PC-9 (cell line): ENCODE measurements at regions of chr10 and their contacts with region 1.

Region 1: DNA sequence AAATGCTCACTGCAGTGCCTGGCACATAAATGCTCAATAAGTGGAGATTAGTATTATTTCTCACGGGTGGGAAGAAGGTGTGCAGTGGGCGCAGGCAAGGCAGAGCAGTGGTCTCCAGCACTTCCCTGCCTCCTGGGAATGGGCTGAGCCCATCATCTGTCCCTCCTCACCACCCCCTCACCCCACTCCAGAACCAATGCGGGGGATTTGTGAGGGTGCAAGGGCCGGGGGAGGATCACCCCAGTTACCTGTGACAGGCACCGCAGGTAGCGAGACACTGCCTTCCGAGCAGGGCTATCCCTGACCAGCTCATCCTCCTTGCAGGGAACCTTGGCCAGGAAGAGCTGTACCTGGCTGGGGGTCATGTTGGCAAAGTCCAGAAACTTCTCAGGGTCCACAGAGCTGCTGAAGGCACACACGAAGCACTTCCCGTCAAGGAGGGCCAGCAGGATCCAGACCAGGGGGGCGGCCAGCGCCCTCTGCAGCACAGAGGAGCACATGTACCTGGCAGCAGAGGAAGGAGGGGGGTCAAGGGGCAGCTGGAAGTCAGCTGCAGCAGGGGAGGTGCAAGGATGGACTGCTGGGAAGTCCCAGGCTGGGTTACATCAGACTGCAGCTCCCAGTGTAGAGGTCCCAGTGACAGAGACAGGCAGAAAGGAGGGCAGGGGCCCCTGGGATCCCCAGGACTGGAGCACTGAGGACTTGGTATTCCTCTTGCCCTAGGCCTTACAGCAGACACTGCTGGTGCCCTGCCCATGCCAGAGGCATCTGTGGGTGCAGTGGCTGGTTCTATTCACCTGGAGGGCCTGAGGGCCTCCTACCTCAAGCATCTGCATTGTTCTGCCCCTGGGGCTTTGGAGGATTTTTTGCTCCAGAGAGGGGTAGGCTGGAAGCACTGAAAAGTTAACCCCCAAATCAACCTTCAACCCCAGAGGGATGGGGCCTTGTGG is 2.7 kb downstream of the CALHM3 start:
- DNase-seq: peak in 1 of 2 experiments; percentile 18
- H3K4me3 ChIP-seq: no peak overlapping the region
- H3K27ac ChIP-seq: no peak overlapping the region
- H3K4me1 ChIP-seq: peaks cover 57% of the 10 kb centered on the region
- H3K27me3 ChIP-seq: no peaks in the 10 kb centered on the region
- CTCF ChIP-seq: no peak; the same call in 1 of the 2 replicates

Region 2: GRCh38 chr10:102033787-102034186 is 1442.5 kb before region 1 on chr10:
- CTCF ChIA-PET with region 1: no interaction called
- POLR2A ChIA-PET with region 1: no interaction called
- intact Hi-C with region 1: no loop called
- DNase-seq: no peak
- H3K4me3 ChIP-seq: no peak overlapping the region
- H3K27ac ChIP-seq: no peak overlapping the region
- H3K4me1 ChIP-seq: no peaks in the 10 kb centered on the region
- H3K27me3 ChIP-seq: no peaks in the 10 kb centered on the region
- CTCF ChIP-seq: no peak

Region 3: DNA sequence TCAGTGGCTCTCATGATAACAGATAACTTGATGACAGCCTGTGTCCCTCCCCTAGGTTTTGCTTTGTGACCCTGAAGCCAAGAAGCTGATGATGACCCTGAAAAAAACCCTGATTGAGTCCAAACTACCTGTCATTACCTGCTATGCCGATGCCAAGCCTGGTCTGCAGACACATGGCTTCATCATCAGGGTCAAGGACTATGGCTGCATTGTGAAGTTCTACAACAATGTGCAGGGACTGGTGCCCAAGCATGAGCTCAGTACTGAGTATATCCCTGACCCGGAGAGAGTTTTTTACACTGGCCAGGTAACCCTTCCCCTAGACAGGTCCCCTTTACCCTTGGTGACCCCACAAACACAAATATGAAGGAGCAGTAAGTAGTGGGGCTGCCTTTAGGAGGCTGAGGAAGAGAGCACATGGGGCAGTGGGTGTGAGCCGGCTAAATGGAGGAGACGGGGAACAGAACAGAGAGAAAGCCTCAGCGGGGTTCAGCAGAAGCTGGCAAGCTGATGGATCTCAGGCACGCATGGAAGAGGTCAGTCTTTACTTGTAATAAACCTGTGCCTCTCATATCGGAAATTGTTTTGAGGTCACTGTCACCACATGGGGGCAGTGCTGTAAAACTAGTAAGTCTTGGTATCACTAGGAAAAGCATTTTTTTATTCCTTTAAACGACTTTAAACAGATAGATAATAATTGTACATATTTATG is 59.7 kb before region 1 on chr10:
- CTCF ChIA-PET with region 1: no interaction called
- POLR2A ChIA-PET with region 1: no interaction called
- intact Hi-C with region 1: no loop called
- DNase-seq: peak; percentile 32 to 38
- H3K4me3 ChIP-seq: no peak overlapping the region
- H3K27ac ChIP-seq: no peak overlapping the region
- H3K4me1 ChIP-seq: no peaks in the 10 kb centered on the region
- H3K27me3 ChIP-seq: no peaks in the 10 kb centered on the region
- CTCF ChIP-seq: peak; percentile 74

Region 4: DNA sequence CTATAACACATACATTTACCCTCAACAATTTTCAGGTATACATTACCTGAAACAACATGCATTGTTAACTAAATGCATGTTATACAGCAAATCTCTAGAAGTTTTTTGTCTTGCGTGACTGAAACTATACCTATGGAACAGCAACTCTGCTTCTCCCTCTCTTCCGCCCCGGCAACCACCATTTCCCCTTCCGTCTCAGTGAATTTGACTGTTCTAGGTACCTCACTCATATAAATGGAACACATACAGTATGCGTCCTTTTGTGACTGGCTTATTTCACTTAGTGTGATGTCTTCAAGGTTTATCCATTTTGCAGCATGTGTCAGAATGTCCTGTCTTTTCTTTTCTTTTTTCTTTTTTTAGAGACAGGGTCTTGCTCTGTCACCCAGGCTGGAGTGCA is 46.7 kb before region 1 on chr10:
- CTCF ChIA-PET with region 1: no interaction called
- POLR2A ChIA-PET with region 1: no interaction called
- intact Hi-C with region 1: no loop called
- DNase-seq: no peak
- H3K4me3 ChIP-seq: no peak overlapping the region
- H3K27ac ChIP-seq: no peak overlapping the region
- H3K4me1 ChIP-seq: no peaks in the 10 kb centered on the region
- H3K27me3 ChIP-seq: no peaks in the 10 kb centered on the region
- CTCF ChIP-seq: no peak

Region 5: DNA sequence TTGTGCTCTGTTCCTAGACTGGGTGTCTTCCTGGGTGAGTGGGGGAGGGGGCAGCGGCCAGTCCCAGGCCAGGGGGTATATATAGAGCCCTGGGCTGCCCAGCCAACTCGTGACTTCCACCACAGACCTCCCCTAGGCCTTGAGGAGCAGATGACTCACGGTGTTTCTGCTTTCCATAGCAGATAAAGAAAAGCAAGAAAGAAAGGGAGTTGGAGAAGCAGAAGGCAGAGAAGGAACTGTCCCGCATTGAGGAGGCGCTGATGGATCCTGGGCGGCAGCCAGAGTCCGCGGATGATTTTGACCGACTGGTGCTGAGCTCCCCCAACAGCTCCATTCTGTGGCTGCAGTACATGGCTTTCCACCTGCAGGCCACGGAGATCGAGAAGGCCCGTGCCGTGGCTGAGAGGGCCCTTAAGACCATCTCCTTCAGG is 34.3 kb before region 1 on chr10:
- CTCF ChIA-PET with region 1: no interaction called
- POLR2A ChIA-PET with region 1: no interaction called
- intact Hi-C with region 1: loop called (anchors 5 kb)
- DNase-seq: no peak
- H3K4me3 ChIP-seq: no peak overlapping the region
- H3K27ac ChIP-seq: no peak overlapping the region
- H3K4me1 ChIP-seq: no peaks in the 10 kb centered on the region
- H3K27me3 ChIP-seq: no peaks in the 10 kb centered on the region
- CTCF ChIP-seq: no peak